Activated naive CD4-positive, alpha-beta T cell treated with anti-CD3 and anti-CD28 coated beads, Interleukin-2, amount 10 ng/mL, durations not matched to agents 7 days and 5 days (primary cell): ENCODE measurements at regions of chr12 and their contacts with region 1.

Region 1: GRCh38 chr12:54379401-54380201 is 4.9 kb downstream of the ZNF385A start:
- DNase-seq: peak; percentile 94
- H3K4me3 Mint-ChIP-seq: peak overlapping the region; percentile 41
- H3K27ac Mint-ChIP-seq: no peak overlapping the region
- H3K4me1 Mint-ChIP-seq: peaks cover 9% of the 10 kb centered on the region
- H3K27me3 Mint-ChIP-seq: peaks cover 48% of the 10 kb centered on the region

Region 2: GRCh38 chr12:54191550-54192022 is 188.0 kb before region 1 on chr12:
- CTCF ChIA-PET with region 1: no interaction called
- DNase-seq: peak; percentile 85
- H3K4me3 Mint-ChIP-seq: no peak overlapping the region
- H3K27ac Mint-ChIP-seq: no peak overlapping the region
- H3K4me1 Mint-ChIP-seq: peaks cover 20% of the 10 kb centered on the region
- H3K27me3 Mint-ChIP-seq: peaks cover 66% of the 10 kb centered on the region

Region 3: DNA sequence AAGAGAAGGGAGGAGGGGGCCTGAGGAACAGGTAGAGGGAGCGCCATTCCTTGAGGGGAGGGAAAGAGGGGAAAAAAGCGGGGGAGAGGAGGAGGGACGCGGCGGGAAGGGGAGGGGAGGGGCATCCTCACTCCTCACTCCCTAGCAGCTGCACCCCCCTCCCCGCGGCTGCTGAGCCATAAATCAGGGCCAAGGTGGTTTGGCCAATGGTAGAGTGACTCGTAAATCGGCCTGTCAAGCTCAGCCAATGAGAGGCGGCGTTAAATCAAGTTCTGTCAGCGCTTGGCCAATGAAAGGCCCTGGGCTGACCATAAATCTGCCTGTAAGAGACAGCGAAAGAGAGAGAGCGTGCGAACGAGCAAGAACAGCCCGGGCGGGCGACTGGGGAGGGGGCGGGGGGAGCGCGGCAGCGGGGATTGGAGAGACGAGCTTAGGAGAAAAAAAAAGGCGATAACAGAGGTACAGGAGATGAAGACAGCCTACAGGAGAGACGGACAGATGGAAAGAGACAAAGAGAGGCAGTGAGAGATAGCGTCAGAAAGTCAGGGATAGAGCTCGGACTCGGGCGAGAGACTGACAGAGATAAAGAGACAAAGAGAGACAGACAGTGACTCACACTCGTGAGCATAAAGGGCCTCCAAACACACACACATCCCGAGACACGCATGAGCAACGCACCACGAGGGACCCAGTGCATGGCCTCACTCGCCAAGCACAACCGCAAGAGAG is 20.4 kb before region 1 on chr12:
- CTCF ChIA-PET with region 1: interaction called, 20 read pairs
- DNase-seq: peak; percentile 97
- H3K4me3 Mint-ChIP-seq: no peak overlapping the region
- H3K27ac Mint-ChIP-seq: no peak overlapping the region
- H3K4me1 Mint-ChIP-seq: peaks cover 32% of the 10 kb centered on the region
- H3K27me3 Mint-ChIP-seq: peaks cover 6% of the 10 kb centered on the region

Region 4: DNA sequence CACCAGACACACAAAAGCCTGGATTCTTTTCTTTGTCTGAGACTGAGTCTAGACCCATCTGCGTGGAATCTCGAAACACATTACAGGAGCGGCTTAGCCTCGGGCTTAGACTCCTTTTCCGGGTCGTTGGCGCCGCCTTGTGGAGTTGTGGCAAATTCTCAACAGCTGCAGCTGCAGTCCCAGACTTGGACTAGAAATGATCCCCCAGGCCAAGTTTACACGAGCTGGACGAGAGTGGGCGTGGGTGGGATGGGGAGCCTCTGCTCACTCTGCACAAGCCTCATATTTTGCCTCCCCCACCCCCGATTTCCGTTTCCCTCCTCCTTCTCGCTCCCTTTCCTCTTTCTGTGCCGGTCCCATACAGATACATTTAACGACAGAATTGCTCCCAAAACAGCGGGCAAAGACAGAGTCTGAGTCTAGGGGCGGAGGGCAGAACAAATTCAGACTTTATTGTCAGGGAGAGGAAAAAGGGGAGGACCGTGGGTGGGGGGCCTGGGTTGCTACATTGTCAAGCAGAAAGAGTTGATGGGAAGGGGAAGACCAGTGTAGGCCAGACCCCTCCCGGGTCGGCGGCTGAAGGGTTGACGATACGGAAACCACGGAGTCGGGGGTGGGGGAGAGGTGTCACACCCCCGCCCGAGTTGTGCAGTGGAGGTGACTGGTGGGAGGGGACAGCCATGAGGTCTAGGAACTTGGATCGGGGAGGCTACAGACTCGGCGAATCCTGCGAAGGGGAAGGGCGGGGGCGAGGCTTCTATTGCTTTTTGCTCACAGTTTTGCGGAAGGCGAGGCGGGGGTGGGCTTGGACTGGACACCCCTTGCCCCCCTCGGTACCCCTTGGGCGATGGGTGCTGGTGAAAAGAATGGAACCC is 10.7 kb before region 1 on chr12:
- CTCF ChIA-PET with region 1: interaction called, 31 read pairs
- DNase-seq: peak; percentile 93
- H3K4me3 Mint-ChIP-seq: peak overlapping the region; percentile 33
- H3K27ac Mint-ChIP-seq: no peak overlapping the region
- H3K4me1 Mint-ChIP-seq: peaks cover 41% of the 10 kb centered on the region
- H3K27me3 Mint-ChIP-seq: peaks cover 33% of the 10 kb centered on the region

Region 5: GRCh38 chr12:54439521-54440255 is 60.1 kb after region 1 on chr12:
- CTCF ChIA-PET with region 1: interaction called, 40 read pairs
- DNase-seq: no peak
- H3K4me3 Mint-ChIP-seq: no peak overlapping the region
- H3K27ac Mint-ChIP-seq: peak overlapping the region; percentile 28
- H3K4me1 Mint-ChIP-seq: peaks cover 8% of the 10 kb centered on the region
- H3K27me3 Mint-ChIP-seq: peaks cover 28% of the 10 kb centered on the region